Activated naive CD4-positive, alpha-beta T cell treated with anti-CD3 and anti-CD28 coated beads for 36 hours (primary cell): ENCODE measurements at regions of chr18 and their contacts with region 1.

Region 1: GRCh38 chr18:21111341-21112139 is at the start of gene ROCK1:
- DNase-seq: peak; percentile 98
- H3K4me3 Mint-ChIP-seq: no peak within 1 kb of the TSS
- H3K27ac Mint-ChIP-seq: peak within 1 kb of the TSS; percentile 93
- H3K4me1 Mint-ChIP-seq: peaks cover 6% of the 10 kb centered on the region
- H3K27me3 Mint-ChIP-seq: no peaks in the 10 kb centered on the region
- total RNA-seq, gene ROCK1: 49.8 to 51.5 TPM

Region 2: DNA sequence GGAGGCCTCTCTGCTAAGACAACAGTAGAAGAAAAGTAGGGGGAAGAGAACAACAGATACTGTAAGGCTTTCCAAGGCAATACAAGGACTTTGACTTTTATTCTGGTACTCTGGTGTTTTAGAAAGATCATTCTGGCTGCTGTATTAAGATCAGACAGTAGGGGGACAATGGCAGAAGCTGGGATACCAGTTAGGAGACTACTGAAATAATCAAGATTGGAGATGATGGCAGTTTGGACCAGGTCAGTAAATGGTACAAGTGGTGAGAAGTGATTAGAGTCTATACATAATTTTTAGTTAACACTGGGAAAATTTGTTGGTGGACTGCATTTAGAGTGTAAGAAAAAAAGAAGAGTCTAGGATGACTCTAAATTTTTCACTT is 139.7 kb before region 1 on chr18:
- CTCF ChIA-PET with region 1: interaction called, 3 read pairs
- intact Hi-C with region 1: loop called (anchors 2 kb)
- DNase-seq: no peak
- H3K4me3 Mint-ChIP-seq: no peak overlapping the region
- H3K27ac Mint-ChIP-seq: no peak overlapping the region
- H3K4me1 Mint-ChIP-seq: no peaks in the 10 kb centered on the region
- H3K27me3 Mint-ChIP-seq: no peaks in the 10 kb centered on the region

Region 3: GRCh38 chr18:21057112-21057511 is 54.4 kb before region 1 on chr18:
- CTCF ChIA-PET with region 1: interaction called, 3 read pairs
- intact Hi-C with region 1: loop called (anchors 2 kb)
- DNase-seq: no peak
- H3K4me3 Mint-ChIP-seq: no peak overlapping the region
- H3K27ac Mint-ChIP-seq: no peak overlapping the region
- H3K4me1 Mint-ChIP-seq: peaks cover 13% of the 10 kb centered on the region
- H3K27me3 Mint-ChIP-seq: no peaks in the 10 kb centered on the region

Region 4: DNA sequence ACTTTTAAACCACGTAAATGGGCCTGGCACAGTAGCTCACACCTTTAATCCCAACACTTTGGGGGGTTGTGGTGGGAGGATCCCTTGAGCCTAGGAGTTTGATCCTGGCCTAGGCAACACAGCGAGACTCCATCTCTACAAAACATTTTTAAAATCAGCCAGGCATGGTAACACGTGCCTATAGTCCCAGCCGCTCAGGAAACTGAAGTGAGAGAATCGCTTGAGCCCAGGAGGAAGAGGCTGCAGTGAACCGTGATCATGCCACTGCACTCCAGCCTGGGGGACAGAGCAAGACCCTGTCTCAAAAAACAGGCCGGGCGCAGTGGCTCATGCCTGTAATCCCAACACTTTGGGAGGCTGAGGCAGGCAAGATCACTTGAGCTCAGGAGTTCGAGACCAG is 12.1 kb before region 1 on chr18:
- CTCF ChIA-PET with region 1: no interaction called
- intact Hi-C with region 1: loop called (anchors 1 kb)
- DNase-seq: no peak
- H3K4me3 Mint-ChIP-seq: no peak overlapping the region
- H3K27ac Mint-ChIP-seq: no peak overlapping the region
- H3K4me1 Mint-ChIP-seq: peaks cover 70% of the 10 kb centered on the region
- H3K27me3 Mint-ChIP-seq: no peaks in the 10 kb centered on the region

Region 5: DNA sequence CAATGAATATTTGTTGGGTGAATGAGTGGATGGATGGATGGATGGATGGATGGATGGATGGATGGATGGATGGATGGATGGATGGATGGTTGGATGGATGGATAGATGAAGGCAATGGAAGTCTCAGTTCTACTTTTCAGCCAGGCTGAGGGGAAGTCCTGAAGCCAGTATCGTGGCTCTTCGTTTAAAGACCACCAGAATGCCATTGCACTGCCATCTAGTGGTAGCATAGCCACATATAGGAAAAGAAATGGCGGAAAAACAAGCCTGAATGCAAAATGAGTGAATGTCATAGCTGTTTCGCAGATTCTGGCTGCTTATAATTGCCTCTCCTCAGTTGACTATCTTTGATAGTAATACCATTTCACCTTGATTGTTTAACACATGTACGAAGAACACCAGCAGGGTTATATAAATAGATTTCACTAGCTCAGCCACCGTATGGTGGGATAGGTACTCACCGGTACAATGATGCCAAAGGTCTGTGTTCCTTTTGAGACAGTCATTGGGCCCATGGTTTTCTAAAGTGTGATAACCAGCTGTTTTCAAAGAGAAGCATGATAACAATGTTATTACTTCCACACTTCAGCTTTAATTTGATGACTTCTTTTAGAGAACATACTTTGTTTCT is 68.2 kb after region 1 on chr18:
- CTCF ChIA-PET with region 1: interaction called, 3 read pairs
- intact Hi-C with region 1: loop called (anchors 2 kb)
- DNase-seq: peak; percentile 72
- H3K4me3 Mint-ChIP-seq: no peak overlapping the region
- H3K27ac Mint-ChIP-seq: no peak overlapping the region
- H3K4me1 Mint-ChIP-seq: peaks cover 3% of the 10 kb centered on the region
- H3K27me3 Mint-ChIP-seq: no peaks in the 10 kb centered on the region

Region 6: DNA sequence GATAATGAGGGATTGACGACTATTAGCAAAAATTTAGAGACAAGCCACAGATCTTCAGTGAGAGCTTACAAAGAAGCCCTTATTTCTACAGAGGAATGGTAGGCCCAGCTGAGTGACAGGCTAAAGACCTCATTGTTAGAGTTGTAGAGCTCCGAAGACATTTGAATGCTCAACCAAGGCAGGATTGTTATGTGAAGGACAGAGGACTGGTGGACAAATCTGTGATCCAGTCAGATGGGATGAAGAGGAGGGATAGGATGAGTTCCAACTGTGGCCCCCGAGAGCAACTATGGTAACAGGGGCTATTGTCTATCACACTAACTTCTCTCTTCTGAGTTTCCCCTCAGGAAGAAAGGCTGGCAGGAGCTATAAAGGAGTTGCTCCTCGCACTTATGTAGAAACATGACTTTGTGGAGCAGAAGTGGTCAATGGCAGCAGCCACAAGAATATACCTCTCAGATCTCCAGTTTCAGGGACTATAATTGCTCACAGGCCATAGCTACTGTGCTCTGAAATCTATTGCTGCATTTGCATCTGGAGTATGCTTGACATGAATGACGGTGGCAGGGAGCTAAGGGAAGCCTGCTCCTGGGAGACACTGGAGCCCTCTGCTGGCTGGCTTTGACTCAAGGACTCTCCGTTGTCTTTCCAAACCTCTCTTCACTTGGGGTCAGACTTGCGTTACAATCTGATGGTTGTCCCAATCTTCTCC is 80.2 kb after region 1 on chr18:
- CTCF ChIA-PET with region 1: no interaction called
- intact Hi-C with region 1: no loop called
- DNase-seq: peak; percentile 52
- H3K4me3 Mint-ChIP-seq: no peak overlapping the region
- H3K27ac Mint-ChIP-seq: no peak overlapping the region
- H3K4me1 Mint-ChIP-seq: no peaks in the 10 kb centered on the region
- H3K27me3 Mint-ChIP-seq: peaks cover 17% of the 10 kb centered on the region

Region 7: GRCh38 chr18:21612125-21612991 is 500.8 kb after region 1 on chr18 and contains the start of gene SNRPD1:
- CTCF ChIA-PET with region 1: no interaction called
- intact Hi-C with region 1: loop called (anchors 2 kb)
- DNase-seq: peak; percentile 89
- H3K4me3 Mint-ChIP-seq: peak within 1 kb of the TSS; percentile 96
- H3K27ac Mint-ChIP-seq: peak within 1 kb of the TSS; percentile 97
- H3K4me1 Mint-ChIP-seq: peaks cover 35% of the 10 kb centered on the region
- H3K27me3 Mint-ChIP-seq: no peaks in the 10 kb centered on the region
- total RNA-seq, gene SNRPD1: 133 to 144 TPM

Region 8: DNA sequence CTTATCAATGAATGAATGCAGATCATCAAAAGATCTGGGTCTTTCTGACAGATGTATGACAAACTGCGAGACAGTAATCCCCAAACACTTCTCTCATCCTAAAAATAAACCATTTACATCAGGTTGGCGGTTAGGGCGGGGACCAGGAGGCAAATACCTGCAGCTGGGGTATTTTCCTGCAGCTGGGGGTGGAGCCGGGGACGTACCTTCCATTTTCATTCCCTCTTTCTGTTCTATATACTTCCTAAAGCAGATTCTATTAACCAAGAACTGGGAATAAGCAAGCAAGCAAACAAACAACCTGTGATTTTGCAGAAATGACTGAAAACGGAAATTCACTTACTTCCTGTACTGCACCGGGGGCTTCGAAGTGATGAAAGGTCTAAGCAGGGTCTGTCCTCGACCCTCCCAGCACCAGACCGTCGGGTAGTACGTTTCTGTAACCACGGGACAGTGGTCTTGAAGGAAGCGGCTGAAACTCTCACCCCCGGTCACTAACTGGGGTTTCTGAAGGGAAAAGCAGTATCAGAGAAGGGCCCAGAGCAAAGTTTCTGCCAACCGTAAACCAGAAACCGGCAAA is 591.8 kb after region 1 on chr18:
- CTCF ChIA-PET with region 1: no interaction called
- intact Hi-C with region 1: loop called (anchors 1 kb)
- DNase-seq: peak; percentile 80
- H3K4me3 Mint-ChIP-seq: peak overlapping the region; percentile 91
- H3K27ac Mint-ChIP-seq: peak overlapping the region; percentile 91
- H3K4me1 Mint-ChIP-seq: peaks cover 21% of the 10 kb centered on the region
- H3K27me3 Mint-ChIP-seq: no peaks in the 10 kb centered on the region